ENCODE measurements at regions of chr10 and their contacts with region 1.

Region 1: GRCh38 chr10:69800109-69800508 is 1.6 kb upstream of the COL13A1 start:
- DNase-seq: peak; percentile 73
- H3K4me3 ChIP-seq: no peak overlapping the region; a peak in 1 of 4 replicates
- H3K27ac ChIP-seq: no peak overlapping the region
- H3K4me1 ChIP-seq: peaks cover 0 to 10% of the 10 kb centered on the region in 2 experiments; a peak in 2 of 4 replicates
- H3K27me3 ChIP-seq: 0 out of 2 replicates have a peak, but pooled peaks cover 10% of the 10 kb centered on the region
- CTCF ChIP-seq: peak; percentile 79
- EP300 ChIP-seq: no peak
- RAD21 ChIP-seq: peak; percentile 77

Region 2: DNA sequence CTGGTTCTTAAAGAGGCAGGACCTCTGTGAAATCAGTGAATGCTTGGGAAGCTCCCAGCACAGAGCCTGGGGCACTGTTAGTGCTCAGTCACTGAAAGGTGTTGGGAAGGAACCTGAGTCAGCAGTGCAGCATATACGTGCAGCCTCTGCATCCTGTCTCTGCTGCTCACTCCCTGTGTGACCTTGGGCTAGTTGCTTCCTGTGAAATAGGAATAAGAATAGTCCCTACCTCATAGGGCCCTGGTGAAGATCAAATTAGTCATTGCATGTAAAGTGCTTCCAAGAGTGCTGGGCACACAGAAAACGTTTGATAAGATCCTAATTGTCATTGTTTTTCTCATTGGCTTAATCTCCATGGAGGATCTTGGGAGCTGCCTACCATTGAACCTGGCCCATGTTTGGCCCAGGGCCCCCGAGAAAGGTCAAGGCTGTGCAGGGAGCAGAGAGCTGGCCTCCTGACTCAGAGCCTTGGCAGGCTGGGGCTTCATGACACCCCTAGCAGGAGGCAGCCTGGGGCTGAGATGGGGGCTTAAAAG is 71.7 kb before region 1 on chr10:
- CTCF ChIA-PET with region 1: interaction called, 24 read pairs
- POLR2A ChIA-PET with region 1: interaction called, 3 read pairs
- DNase-seq: peak; percentile 66
- H3K4me3 ChIP-seq: no peak overlapping the region
- H3K27ac ChIP-seq: peak overlapping the region; percentile 39 to 51; a peak in 3 of 4 replicates
- H3K4me1 ChIP-seq: peaks cover 12 to 39% of the 10 kb centered on the region in 2 experiments; a peak in 3 of 4 replicates
- H3K27me3 ChIP-seq: no peaks in the 10 kb centered on the region
- CTCF ChIP-seq: no peak
- EP300 ChIP-seq: no peak
- RAD21 ChIP-seq: no peak

Region 3: DNA sequence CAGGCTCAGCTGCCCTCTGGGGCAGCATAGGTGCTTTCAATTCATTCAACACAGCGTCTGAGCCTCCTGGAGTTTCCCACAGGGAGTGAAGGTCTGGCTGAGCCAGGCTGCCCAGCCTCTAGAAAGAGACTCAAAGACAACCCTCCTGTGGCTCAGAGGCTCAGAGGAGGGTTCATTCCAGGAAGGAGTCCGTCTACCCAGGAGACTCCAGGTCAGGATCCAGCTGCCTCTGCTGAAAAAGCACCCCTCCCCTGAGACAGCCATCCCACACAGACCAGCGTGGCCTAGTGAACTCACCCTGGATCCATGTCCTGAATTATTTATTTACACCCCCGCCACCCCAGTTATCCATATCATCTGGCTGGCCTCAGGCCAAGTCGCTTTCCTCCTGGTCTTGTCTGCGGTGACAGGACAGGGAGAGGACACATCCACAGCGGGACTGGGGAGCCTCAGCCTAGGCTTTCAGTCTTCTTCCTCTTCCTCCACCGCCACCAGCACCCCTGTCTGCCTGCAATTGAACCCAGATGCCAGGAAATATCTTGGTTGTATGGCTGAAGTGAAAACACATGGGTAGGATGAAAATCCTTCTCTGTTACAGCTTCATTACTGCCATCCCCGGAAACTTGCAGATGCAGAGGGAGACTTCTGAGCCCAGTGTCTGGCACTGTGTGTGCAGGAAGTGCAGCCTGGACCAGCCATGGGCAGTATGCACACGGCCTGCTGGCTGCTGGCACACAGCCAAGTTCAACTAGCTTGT is 42.4 kb before region 1 on chr10:
- CTCF ChIA-PET with region 1: interaction called, 28 read pairs
- POLR2A ChIA-PET with region 1: no interaction called
- DNase-seq: peak; percentile 82
- H3K4me3 ChIP-seq: peak overlapping the region in 1 of 2 experiments; percentile 7; a peak in 1 of 4 replicates
- H3K27ac ChIP-seq: peak overlapping the region; percentile 71 to 99
- H3K4me1 ChIP-seq: peaks cover 14 to 46% of the 10 kb centered on the region in 2 experiments
- H3K27me3 ChIP-seq: no peaks in the 10 kb centered on the region
- CTCF ChIP-seq: no peak
- EP300 ChIP-seq: no peak; a peak in 1 of 4 replicates
- RAD21 ChIP-seq: peak; percentile 22; the same call in 1 of the 2 replicates

Region 4: GRCh38 chr10:69780077-69780476 is 20.0 kb before region 1 on chr10:
- CTCF ChIA-PET with region 1: interaction called, 18 read pairs
- POLR2A ChIA-PET with region 1: no interaction called
- DNase-seq: no peak
- H3K4me3 ChIP-seq: no peak overlapping the region
- H3K27ac ChIP-seq: no peak overlapping the region
- H3K4me1 ChIP-seq: no peaks in the 10 kb centered on the region
- H3K27me3 ChIP-seq: peaks cover 32% of the 10 kb centered on the region; the same call in 1 of the 2 replicates
- CTCF ChIP-seq: no peak
- EP300 ChIP-seq: no peak
- RAD21 ChIP-seq: no peak

Region 5: DNA sequence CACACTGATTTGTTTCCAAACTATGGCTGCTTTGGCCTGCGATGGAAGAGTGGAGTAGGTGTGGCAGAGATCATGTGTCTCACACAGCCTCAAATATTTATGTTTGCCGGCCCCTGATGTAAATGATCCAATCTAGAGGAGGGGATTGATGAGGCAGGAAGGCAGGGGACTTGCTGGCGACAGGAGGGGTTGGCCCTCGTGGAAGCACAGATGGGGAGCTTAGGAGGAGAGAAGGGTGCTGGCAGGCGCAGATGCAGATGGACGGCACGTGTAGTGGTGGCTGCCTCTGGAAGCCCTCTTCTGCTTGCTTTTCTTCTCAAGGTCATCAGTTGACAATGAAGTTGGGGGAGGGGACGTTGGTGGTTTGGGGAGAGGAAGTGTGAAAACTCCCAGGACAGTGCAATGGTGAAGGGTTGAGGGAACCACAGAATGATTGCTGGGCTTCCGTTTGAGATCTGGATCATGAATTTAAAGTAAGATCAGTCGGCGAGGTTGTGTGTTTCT is 17.0 kb after region 1 on chr10:
- CTCF ChIA-PET with region 1: interaction called, 32 read pairs
- POLR2A ChIA-PET with region 1: no interaction called
- DNase-seq: no peak
- H3K4me3 ChIP-seq: no peak overlapping the region
- H3K27ac ChIP-seq: no peak overlapping the region
- H3K4me1 ChIP-seq: peaks cover 0 to 9% of the 10 kb centered on the region in 2 experiments; a peak in 1 of 4 replicates
- H3K27me3 ChIP-seq: no peaks in the 10 kb centered on the region
- CTCF ChIP-seq: no peak
- EP300 ChIP-seq: no peak
- RAD21 ChIP-seq: no peak

Region 6: DNA sequence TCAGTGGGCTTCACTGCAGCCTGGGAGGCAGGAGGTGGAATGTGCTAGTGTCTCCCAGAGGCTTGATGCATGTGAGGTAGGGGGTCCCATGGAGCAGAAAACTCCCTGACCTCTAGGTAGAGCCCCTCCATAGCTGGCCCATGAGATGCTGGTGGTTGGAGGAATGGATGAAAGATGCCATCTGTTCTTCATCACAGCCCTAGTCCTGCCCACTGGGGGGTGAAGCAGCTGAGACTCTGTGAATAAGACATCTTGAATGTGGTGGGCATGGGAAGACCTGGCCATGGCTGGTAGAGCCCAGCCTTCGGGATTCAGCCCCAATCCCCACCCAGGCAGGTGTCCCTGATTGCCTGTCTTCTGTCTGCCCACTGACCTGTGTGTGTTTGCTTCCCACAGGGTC is 94.0 kb after region 1 on chr10:
- CTCF ChIA-PET with region 1: no interaction called
- POLR2A ChIA-PET with region 1: no interaction called
- DNase-seq: no peak
- H3K4me3 ChIP-seq: no peak overlapping the region
- H3K27ac ChIP-seq: no peak overlapping the region
- H3K4me1 ChIP-seq: peaks cover 0 to 24% of the 10 kb centered on the region in 2 experiments; a peak in 1 of 4 replicates
- H3K27me3 ChIP-seq: no peaks in the 10 kb centered on the region
- CTCF ChIP-seq: no peak
- EP300 ChIP-seq: no peak
- RAD21 ChIP-seq: no peak

Region 7: DNA sequence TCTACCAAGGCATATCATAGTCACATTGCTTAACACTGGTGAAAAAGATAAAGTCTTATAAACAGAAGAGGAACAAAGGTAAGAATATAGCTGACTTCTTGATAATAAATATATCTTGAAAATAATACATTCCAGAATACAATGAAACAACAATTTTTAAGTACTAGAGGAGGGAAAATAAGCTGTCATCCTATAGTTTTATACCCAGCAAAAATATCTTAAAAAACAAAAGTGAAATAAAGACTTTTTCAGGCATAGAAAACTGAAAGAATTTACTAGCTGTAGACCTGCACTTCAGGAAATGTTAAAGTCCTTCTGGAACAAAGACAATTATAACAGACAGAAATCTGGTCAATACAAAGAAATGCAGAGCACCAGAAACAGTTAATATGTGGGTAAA is 231.1 kb after region 1 on chr10:
- CTCF ChIA-PET with region 1: no interaction called
- POLR2A ChIA-PET with region 1: no interaction called
- DNase-seq: no peak
- H3K4me3 ChIP-seq: no peak overlapping the region
- H3K27ac ChIP-seq: no peak overlapping the region
- H3K4me1 ChIP-seq: no peaks in the 10 kb centered on the region; a peak in 1 of 4 replicates
- H3K27me3 ChIP-seq: peaks cover 11% of the 10 kb centered on the region; the same call in 1 of the 2 replicates
- CTCF ChIP-seq: no peak
- EP300 ChIP-seq: no peak
- RAD21 ChIP-seq: no peak